ENCODE measurements at regions of chr6 and their contacts with region 1.

Region 1: DNA sequence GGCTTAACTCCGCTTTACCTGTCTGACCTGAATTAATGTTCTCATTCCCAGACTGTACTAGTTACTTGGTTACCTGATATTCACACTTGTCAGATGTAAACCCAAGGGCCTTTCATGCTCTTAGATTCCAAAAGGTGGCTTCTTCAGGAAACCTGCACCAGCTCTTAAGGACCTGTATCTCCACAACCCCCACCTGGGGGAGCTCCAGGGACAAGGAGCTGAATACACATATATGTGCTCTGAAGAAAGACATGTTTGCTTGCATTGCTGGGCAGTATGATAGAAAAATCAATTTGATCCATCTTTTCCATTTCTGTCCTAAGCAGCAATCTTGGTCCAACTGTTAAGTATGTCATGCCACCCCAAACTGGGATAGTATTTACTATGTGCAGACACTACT is 64.8 kb upstream of the POU3F2 start:
- DNase-seq: peak; percentile 19 to 57 (median 32)
- ATAC-seq: peak; percentile 86
- H3K4me3 ChIP-seq: no peak overlapping the region
- H3K27ac ChIP-seq: no peak overlapping the region
- H3K4me1 ChIP-seq: no peaks in the 10 kb centered on the region
- H3K27me3 ChIP-seq: no peaks in the 10 kb centered on the region
- CTCF ChIP-seq: peak; percentile 47 to 66 (median 57); a peak in 5 of 6 replicates
- EP300 ChIP-seq: no peak
- POLR2A ChIP-seq: no peak
- RAD21 ChIP-seq: peak; percentile 43 to 78; a peak in 3 of 4 replicates

Region 2: GRCh38 chr6:98834060-98835031 is 64.8 kb after region 1 on chr6 and contains the start of gene POU3F2:
- CTCF ChIA-PET with region 1: interaction called, 3 read pairs
- POLR2A ChIA-PET with region 1: no interaction called
- in situ Hi-C with region 1: loop called (anchors 5 kb)
- intact Hi-C with region 1: loop called (anchors 1 kb)
- DNase-seq: peak; percentile 96 to 97 (median 96)
- ATAC-seq: peak; percentile 93
- H3K4me3 ChIP-seq: peak within 1 kb of the TSS; percentile 53
- H3K27ac ChIP-seq: peak within 1 kb of the TSS; percentile 59; the same call in 2 of the 3 replicates
- H3K4me1 ChIP-seq: peaks cover 0 to 50% of the 10 kb centered on the region in 2 experiments; a peak in 4 of 5 replicates
- H3K27me3 ChIP-seq: peaks cover 0 to 13% of the 10 kb centered on the region in 2 experiments; a peak in 2 of 5 replicates
- CTCF ChIP-seq: no peak
- EP300 ChIP-seq: peak; percentile 61; the same call in 1 of the 2 replicates
- POLR2A ChIP-seq: no peak
- RAD21 ChIP-seq: no peak
- polyA plus RNA-seq, gene POU3F2: 0.08 to 0.10 TPM

Region 3: DNA sequence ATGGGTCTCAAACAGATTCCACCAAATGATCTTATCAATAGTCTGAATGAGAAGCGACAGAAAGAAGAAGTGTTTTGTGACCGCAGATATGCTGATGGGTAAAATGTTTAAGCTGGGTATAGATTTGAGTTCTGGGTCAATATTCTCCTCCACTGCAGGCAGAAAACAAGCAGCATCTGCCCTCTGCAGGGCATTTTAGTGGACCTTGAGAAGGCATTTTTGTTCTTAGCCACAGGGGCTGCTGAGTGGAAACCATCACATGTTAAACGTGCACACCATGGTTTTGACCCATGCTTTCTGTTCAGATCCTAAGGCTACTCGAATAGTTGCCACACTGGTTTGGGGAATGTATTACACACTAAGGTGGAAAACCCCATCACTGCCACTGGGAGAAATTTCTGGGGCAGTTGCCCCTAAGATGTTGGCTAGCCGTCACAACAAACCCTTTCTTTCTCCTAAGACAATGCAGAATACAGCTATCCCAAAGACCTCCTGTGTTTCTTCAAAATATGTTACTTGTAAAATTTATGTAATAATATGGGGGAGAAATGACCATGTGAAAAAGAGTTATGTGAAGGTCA is 70.3 kb after region 1 on chr6:
- CTCF ChIA-PET with region 1: interaction called, 3 read pairs
- POLR2A ChIA-PET with region 1: no interaction called
- in situ Hi-C with region 1: loop called (anchors 5 kb)
- intact Hi-C with region 1: loop called (anchors 1 kb)
- DNase-seq: peak in 1 of 4 experiments; percentile 44
- ATAC-seq: peak; percentile 52
- H3K4me3 ChIP-seq: no peak overlapping the region
- H3K27ac ChIP-seq: no peak overlapping the region
- H3K4me1 ChIP-seq: peaks cover 0 to 19% of the 10 kb centered on the region in 2 experiments; a peak in 4 of 5 replicates
- H3K27me3 ChIP-seq: peaks cover 0 to 25% of the 10 kb centered on the region in 2 experiments; a peak in 2 of 5 replicates
- CTCF ChIP-seq: peak; percentile 39 to 68 (median 49); a peak in 5 of 6 replicates
- EP300 ChIP-seq: no peak
- POLR2A ChIP-seq: no peak
- RAD21 ChIP-seq: peak; percentile 17 to 68; a peak in 2 of 4 replicates

Region 4: DNA sequence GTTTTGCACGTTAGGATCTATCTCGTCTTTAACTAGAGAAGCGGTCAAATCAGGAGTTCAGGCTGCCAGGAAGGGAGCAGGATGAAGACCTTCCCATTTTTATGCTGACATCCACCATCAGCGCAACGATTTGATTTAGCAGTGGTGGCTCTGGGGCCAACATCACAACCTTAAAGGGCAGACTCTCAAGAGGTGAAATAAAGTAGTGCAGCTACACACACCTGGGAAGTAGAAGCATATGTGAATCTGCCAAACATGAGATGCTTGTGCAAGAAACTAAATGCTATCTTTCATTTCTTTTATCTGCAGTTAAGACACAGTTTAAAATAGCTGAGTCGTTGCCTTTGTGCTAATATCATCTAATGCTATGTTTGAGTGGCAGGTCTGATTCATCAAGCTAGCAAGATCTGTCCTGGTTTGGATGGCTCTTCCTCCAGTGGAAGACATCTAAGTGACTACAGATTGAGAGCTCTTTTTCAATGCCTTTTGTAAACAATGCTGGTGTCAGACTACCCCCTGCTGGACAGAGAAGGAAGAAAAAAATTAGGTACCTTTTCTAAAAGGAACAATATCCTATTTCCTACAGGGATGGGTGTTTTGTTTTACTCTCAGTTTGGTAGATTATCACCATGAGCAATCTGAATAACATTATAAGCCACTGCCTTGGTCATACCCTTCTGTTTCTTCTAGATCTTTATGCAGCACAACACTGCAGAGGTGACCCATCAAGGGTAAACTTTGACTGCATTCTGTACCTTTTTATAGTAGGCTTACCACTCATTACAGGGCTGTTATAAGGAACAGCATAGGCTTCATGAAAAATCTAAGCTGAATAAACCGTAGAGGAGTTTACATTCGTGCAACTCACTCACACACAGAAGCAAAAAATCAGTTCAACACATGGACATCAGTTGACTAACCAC is 349.8 kb after region 1 on chr6:
- CTCF ChIA-PET with region 1: interaction called, 5 read pairs
- POLR2A ChIA-PET with region 1: no interaction called
- in situ Hi-C with region 1: no loop called
- intact Hi-C with region 1: loop called (anchors 2 kb)
- DNase-seq: peak; percentile 30 to 53 (median 40)
- ATAC-seq: peak; percentile 59; the same call in 2 of the 3 replicates
- H3K4me3 ChIP-seq: no peak overlapping the region
- H3K27ac ChIP-seq: no peak overlapping the region
- H3K4me1 ChIP-seq: no peaks in the 10 kb centered on the region
- H3K27me3 ChIP-seq: no peaks in the 10 kb centered on the region
- CTCF ChIP-seq: peak; percentile 51 to 75 (median 64); a peak in 5 of 6 replicates
- EP300 ChIP-seq: no peak
- POLR2A ChIP-seq: no peak
- RAD21 ChIP-seq: peak; percentile 78 to 87